CD4-positive, alpha-beta memory T cell (primary cell): ENCODE measurements at regions of chr9 and their contacts with region 1.

Region 1: DNA sequence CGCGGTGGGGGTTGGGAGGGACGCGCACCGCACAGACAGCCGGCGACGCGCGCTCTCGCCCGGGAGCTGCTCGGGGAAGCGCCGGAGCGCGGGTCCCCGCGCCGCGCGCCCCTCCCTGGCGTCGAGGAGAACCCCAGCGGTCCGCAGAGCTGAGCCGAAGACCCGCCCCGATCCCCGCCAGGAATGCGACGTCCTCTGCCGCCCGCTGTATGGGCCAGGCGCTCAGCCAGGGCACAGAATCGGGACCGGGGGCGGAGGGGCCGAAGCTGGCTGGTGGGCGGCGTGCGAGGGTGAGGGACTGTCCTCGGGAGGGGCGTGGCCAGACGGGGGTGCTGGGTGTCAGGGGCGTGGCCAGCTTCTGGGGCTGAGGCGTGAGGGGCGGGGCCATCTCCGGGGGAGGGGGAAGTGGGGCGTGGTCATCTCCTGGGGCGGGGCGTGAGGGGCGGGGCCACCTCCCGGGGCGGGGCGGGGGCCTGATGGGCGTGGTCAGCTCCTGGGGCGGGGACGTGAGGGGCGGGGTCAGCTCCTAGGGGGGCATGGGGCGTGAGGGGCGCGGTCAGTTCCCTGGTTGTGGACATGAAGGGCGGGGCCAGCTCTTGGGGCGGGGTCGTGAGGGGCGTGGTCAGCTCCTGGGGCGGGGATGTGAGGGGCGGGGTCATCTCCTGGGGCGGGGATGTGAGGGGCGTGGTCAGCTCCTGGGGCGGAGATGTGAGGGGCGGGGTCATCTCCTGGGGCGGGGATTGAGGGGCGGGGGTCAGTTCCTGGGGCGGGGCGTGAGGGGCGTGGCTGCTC is 965 bp downstream of the PTGDS start:
- DNase-seq: peak; percentile 66 to 81 (median 69)
- H3K4me3 ChIP-seq: peak overlapping the region in 1 of 2 donors; percentile 9
- H3K4me3 Mint-ChIP-seq: peak overlapping the region in 5 of 8 donors; percentile 24 to 61 (median 47)
- H3K27ac ChIP-seq: peak overlapping the region; percentile 2
- H3K27ac Mint-ChIP-seq: no peak overlapping the region
- H3K4me1 ChIP-seq: peaks cover 41% of the 10 kb centered on the region
- H3K4me1 Mint-ChIP-seq: peaks cover 11 to 32% (median 23%) of the 10 kb centered on the region in 4 donors
- H3K27me3 ChIP-seq: no peaks in the 10 kb centered on the region
- H3K27me3 Mint-ChIP-seq: no peaks in the 10 kb centered on the region

Region 2: DNA sequence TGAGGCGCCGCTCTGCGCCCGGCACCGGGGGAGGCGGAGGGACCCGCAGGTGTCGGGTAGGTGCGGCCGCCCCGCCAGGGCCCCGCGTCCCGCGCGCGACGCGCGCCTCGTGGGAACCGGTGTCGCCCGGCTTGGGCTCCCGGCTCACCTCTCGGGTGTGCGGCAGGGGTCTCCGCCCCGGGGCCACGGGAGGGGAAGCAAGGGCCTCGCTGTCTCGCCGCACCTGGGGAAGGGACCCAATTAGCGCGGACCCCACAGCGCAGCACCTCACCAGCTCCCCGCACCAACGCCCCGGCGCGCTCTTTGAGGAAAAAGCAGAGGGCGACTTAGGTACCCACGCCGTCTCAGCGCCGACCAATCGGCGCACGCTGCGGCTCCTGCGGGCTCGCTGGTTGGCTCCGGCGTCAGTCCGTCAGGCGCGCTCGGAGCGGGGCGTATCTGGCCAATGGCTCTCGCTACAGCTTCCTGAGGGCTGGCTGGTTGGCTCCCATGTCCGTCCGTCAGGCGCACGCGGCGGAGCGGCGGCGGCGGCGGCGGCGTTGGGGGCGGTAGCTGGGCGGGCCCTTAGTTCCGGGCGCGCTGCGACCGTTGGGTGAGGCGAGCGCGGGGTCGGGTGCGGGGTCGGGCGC is 92.2 kb before region 1 on chr9 and contains the start of gene TRAF2:
- CTCF ChIA-PET with region 1: no interaction called
- POLR2A ChIA-PET with region 1: no interaction called
- intact Hi-C with region 1: loop called (anchors 1 kb)
- DNase-seq: peak; percentile 97
- H3K4me3 ChIP-seq: peak within 1 kb of the TSS; percentile 36 to 82
- H3K4me3 Mint-ChIP-seq: peak within 1 kb of the TSS; percentile 84 to 92 (median 88)
- H3K27ac ChIP-seq: peak within 1 kb of the TSS; percentile 98
- H3K27ac Mint-ChIP-seq: peak within 1 kb of the TSS; percentile 92 to 97 (median 94)
- H3K4me1 ChIP-seq: peaks cover 54% of the 10 kb centered on the region
- H3K4me1 Mint-ChIP-seq: peaks cover 16 to 57% (median 32%) of the 10 kb centered on the region in 4 donors
- H3K27me3 ChIP-seq: no peaks in the 10 kb centered on the region
- H3K27me3 Mint-ChIP-seq: no peaks in the 10 kb centered on the region
- total RNA-seq, gene TRAF2: 40.2 to 43.2 TPM

Region 3: DNA sequence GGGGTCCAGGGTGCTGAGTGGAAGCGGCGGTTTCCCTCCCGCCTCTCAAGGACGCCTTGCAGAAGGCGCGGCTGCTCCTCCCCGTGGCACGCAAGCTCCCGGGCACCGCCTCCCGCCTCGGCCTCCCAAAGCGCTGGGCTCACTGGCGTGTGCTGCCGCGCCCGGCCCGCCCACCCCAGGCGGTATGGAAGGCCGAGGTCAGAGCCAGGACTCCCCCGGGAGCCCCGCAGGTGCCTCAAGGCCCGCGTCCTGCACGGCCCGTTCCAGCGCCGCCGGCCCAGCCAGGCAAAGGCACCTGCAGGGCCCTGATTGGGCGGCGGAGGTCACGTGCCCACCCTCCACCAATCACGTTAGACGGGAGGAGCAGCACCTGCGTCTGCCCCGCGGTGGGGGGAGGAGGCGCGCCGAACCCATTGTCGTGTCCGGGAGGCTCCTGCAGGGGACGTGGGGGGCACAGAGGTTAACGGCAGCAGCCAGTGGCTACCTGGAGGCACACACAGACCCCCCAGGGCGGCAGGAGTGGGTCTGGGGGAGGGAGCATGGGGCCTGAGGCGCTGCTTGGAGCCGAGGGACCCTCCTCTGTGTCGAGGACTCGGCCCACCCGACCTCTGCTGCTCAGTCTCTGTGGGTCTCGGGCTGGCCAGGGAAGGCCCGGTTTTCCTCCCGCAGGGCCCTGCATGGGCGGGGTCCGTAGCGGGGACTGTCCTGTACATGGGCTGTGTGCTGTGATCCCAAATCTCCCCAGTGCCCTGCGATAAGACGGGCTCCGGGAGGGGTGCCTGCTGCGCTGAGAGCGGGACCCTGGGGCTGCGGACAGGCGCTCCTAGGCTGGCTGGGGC is 28.2 kb before region 1 on chr9:
- CTCF ChIA-PET with region 1: interaction called, 14 read pairs
- POLR2A ChIA-PET with region 1: interaction called, 13 read pairs
- intact Hi-C with region 1: no loop called
- DNase-seq: peak; percentile 93 to 97 (median 95)
- H3K4me3 ChIP-seq: peak overlapping the region; percentile 29 to 57
- H3K4me3 Mint-ChIP-seq: peak overlapping the region; percentile 79 to 90 (median 86)
- H3K27ac ChIP-seq: peak overlapping the region; percentile 82
- H3K27ac Mint-ChIP-seq: peak overlapping the region; percentile 72 to 91 (median 89)
- H3K4me1 ChIP-seq: peaks cover 16% of the 10 kb centered on the region
- H3K4me1 Mint-ChIP-seq: peaks cover 3 to 16% (median 8%) of the 10 kb centered on the region in 4 donors
- H3K27me3 ChIP-seq: no peaks in the 10 kb centered on the region
- H3K27me3 Mint-ChIP-seq: no peaks in the 10 kb centered on the region

Region 4: DNA sequence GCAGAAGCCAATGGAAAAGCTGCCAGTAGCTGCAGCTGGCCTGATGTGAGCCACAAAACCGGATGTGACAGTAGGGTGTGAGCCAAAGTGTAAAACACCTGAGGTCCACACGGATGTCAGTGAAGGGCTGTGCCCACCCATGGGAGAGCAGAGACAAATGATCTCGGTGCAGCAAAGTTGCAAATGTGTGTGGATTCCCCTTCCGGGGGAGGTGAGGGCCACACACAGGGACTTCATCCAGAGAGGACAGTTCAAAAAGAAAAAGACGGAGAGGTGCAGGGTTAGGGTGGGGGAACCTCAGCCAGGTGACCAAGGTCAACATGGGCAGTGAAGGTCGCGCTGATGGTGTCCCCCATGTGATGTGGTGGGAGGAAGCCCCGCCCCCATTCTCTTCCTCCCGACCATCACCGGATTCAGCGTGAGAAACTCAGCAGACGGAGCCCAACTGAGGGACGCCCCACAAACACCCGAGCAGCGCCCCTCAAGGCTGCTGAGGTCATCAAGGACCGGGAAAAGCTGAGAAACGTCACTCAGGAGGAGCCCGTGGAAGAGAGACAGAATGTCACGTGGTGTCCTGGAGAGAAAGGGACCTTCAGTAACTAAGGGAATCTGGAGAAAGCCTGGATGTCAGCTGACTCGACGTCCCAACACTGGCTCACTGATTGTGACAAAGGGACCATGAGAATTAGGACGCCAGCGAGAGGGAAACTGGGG is 12.3 kb before region 1 on chr9:
- CTCF ChIA-PET with region 1: interaction called, 3 read pairs
- POLR2A ChIA-PET with region 1: interaction called, 75 read pairs
- intact Hi-C with region 1: no loop called
- DNase-seq: peak; percentile 41 to 71 (median 48)
- H3K4me3 ChIP-seq: no peak overlapping the region
- H3K4me3 Mint-ChIP-seq: peak overlapping the region; percentile 70 to 86 (median 79)
- H3K27ac ChIP-seq: peak overlapping the region; percentile 42
- H3K27ac Mint-ChIP-seq: peak overlapping the region; percentile 77 to 91 (median 88)
- H3K4me1 ChIP-seq: peaks cover 47% of the 10 kb centered on the region
- H3K4me1 Mint-ChIP-seq: peaks cover 19 to 38% (median 30%) of the 10 kb centered on the region in 4 donors
- H3K27me3 ChIP-seq: no peaks in the 10 kb centered on the region
- H3K27me3 Mint-ChIP-seq: no peaks in the 10 kb centered on the region

Region 5: DNA sequence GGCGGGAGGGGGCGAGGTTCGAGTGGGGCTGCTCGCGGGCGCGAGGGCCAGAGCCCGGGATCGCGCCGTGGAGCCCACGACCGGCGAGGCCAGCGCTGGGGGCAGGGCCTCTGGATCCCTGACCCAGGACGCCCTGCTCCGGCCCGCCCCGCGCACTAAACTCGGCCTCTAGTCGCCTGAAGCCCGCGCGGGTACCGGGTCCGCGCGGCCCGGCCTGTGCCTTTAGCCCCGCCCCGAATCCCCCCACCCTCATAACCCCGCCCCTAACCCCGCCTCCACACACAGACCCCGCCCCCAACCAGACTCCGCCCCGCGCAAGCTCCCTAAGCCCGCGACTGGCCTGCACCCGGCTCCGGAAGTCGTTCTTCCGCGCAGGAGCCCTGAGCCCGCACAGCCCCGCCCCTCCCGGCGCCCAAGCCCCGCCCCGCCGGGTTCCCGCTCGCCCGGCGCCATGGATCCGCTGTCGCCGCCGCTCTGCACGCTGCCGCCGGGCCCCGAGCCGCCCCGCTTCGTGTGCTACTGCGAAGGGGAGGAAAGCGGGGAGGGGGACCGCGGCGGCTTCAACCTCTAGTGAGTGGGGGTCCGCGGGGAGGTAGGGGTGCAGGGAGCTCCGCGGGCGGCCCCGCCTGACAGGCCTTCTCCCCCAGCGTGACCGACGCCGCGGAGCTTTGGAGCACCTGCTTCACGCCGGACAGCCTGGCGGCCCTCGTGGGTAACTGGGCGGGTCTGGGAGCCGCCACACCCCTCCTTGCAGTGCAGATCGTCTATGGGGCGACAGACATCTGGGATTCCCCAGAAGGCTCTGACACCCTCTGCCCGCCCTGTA is 13.9 kb after region 1 on chr9 and contains the start of gene PAXX:
- CTCF ChIA-PET with region 1: interaction called, 4 read pairs
- POLR2A ChIA-PET with region 1: interaction called, 57 read pairs
- intact Hi-C with region 1: loop called (anchors 2 kb)
- DNase-seq: peak; percentile 92 to 93 (median 93)
- H3K4me3 ChIP-seq: peak within 1 kb of the TSS; percentile 86 to 90
- H3K4me3 Mint-ChIP-seq: peak within 1 kb of the TSS; percentile 84 to 92 (median 88)
- H3K27ac ChIP-seq: peak within 1 kb of the TSS; percentile 85
- H3K27ac Mint-ChIP-seq: peak within 1 kb of the TSS; percentile 83 to 94 (median 88)
- H3K4me1 ChIP-seq: peaks cover 41% of the 10 kb centered on the region
- H3K4me1 Mint-ChIP-seq: peaks cover 4 to 41% (median 20%) of the 10 kb centered on the region in 4 donors
- H3K27me3 ChIP-seq: no peaks in the 10 kb centered on the region
- H3K27me3 Mint-ChIP-seq: peaks cover 0 to 5% of the 10 kb centered on the region in 2 donors
- total RNA-seq, gene PAXX: 94.2 to 101 TPM

Region 6: GRCh38 chr9:137000177-137000883 is 22.1 kb after region 1 on chr9:
- CTCF ChIA-PET with region 1: interaction called, 4 read pairs
- POLR2A ChIA-PET with region 1: interaction called, 57 read pairs
- intact Hi-C with region 1: no loop called
- DNase-seq: peak in 4 of 5 donors; percentile 40 to 53 (median 44)
- H3K4me3 ChIP-seq: no peak overlapping the region
- H3K4me3 Mint-ChIP-seq: peak overlapping the region in 7 of 8 donors; percentile 26 to 81 (median 60)
- H3K27ac ChIP-seq: no peak overlapping the region
- H3K27ac Mint-ChIP-seq: peak overlapping the region; percentile 65 to 92 (median 86)
- H3K4me1 ChIP-seq: peaks cover 45% of the 10 kb centered on the region
- H3K4me1 Mint-ChIP-seq: peaks cover 13 to 50% (median 25%) of the 10 kb centered on the region in 4 donors
- H3K27me3 ChIP-seq: no peaks in the 10 kb centered on the region
- H3K27me3 Mint-ChIP-seq: no peaks in the 10 kb centered on the region

Region 7: GRCh38 chr9:137011156-137011555 is 32.9 kb after region 1 on chr9:
- CTCF ChIA-PET with region 1: no interaction called
- POLR2A ChIA-PET with region 1: no interaction called
- intact Hi-C with region 1: no loop called
- DNase-seq: no peak
- H3K4me3 ChIP-seq: no peak overlapping the region
- H3K4me3 Mint-ChIP-seq: no peak overlapping the region
- H3K27ac ChIP-seq: no peak overlapping the region
- H3K27ac Mint-ChIP-seq: no peak overlapping the region
- H3K4me1 ChIP-seq: no peaks in the 10 kb centered on the region
- H3K4me1 Mint-ChIP-seq: no peaks in the 10 kb centered on the region
- H3K27me3 ChIP-seq: no peaks in the 10 kb centered on the region
- H3K27me3 Mint-ChIP-seq: no peaks in the 10 kb centered on the region